AG04450 (cell line): ENCODE measurements at regions of chr19 and their contacts with region 1.

Region 1: GRCh38 chr19:47863514-47863936 is 4.5 kb downstream of the TPRX2 start:
- DNase-seq: peak; percentile 21
- H3K4me3 ChIP-seq: no peak overlapping the region
- H3K27ac ChIP-seq: no peak overlapping the region
- H3K27me3 ChIP-seq: peaks cover 6% of the 10 kb centered on the region
- CTCF ChIP-seq: peak; percentile 97

Region 2: GRCh38 chr19:47663841-47664771 is 199.4 kb before region 1 on chr19:
- CTCF ChIA-PET with region 1: no interaction called
- POLR2A ChIA-PET with region 1: no interaction called
- DNase-seq: peak; percentile 91
- H3K4me3 ChIP-seq: peak overlapping the region; percentile 37
- H3K27ac ChIP-seq: peak overlapping the region; percentile 100
- H3K27me3 ChIP-seq: no peaks in the 10 kb centered on the region
- CTCF ChIP-seq: no peak

Region 3: GRCh38 chr19:47745010-47745901 is 118.3 kb before region 1 on chr19 and contains the start of gene NOP53:
- CTCF ChIA-PET with region 1: no interaction called
- POLR2A ChIA-PET with region 1: no interaction called
- DNase-seq: peak; percentile 95
- H3K4me3 ChIP-seq: peak within 1 kb of the TSS; percentile 75
- H3K27ac ChIP-seq: peak within 1 kb of the TSS; percentile 90
- H3K27me3 ChIP-seq: no peaks in the 10 kb centered on the region
- CTCF ChIP-seq: no peak
- polyA plus RNA-seq, gene NOP53: 114 and 123 TPM in 2 replicates

Region 4: GRCh38 chr19:47790398-47790814 is 73.1 kb before region 1 on chr19:
- CTCF ChIA-PET with region 1: interaction called, 10 read pairs
- POLR2A ChIA-PET with region 1: no interaction called
- DNase-seq: no peak
- H3K4me3 ChIP-seq: no peak overlapping the region
- H3K27ac ChIP-seq: no peak overlapping the region
- H3K27me3 ChIP-seq: no peaks in the 10 kb centered on the region
- CTCF ChIP-seq: peak; percentile 86